ENCODE measurements at regions of chr6 and their contacts with region 1.

Region 1: DNA sequence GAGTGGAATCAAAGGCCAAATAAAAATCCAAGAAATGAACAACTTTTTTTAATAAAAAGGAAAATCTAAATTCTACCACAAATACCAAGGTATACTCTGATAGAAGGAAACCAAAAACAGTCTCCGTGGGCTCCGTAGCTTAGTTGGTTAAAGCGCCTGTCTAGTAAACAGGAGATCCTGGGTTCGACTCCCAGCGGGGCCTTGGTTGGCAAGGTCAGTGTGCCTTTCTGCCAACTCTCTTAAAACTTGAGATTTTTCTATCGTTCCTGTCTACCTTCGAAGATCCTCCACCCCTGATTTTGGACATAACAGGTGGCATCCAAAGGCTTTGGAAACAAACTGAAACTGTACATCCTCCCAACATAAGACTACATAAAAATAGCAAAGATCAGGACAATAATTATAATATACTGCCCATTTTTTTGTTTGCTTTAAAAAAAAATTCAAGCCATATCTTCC is 197.9 kb downstream of the TRIM27 start:
- DNase-seq: peak; percentile 25
- ATAC-seq: no peak
- H3K4me3 ChIP-seq: no peak overlapping the region
- H3K27ac ChIP-seq: no peak overlapping the region
- H3K4me1 ChIP-seq: peaks cover 49% of the 10 kb centered on the region
- H3K27me3 ChIP-seq: peaks cover 0 to 12% of the 10 kb centered on the region in 2 experiments; a peak in 2 of 5 replicates
- CTCF ChIP-seq: no peak
- EP300 ChIP-seq: no peak
- POLR2A ChIP-seq: no peak
- RAD21 ChIP-seq: no peak

Region 2: GRCh38 chr6:28807682-28808280 is 81.9 kb after region 1 on chr6:
- CTCF ChIA-PET with region 1: no interaction called
- POLR2A ChIA-PET with region 1: no interaction called
- in situ Hi-C with region 1: no loop called
- intact Hi-C with region 1: loop called (anchors 5 kb)
- DNase-seq: peak; percentile 81
- ATAC-seq: peak; percentile 28
- H3K4me3 ChIP-seq: peak overlapping the region; percentile 54 to 78 (median 67)
- H3K27ac ChIP-seq: no peak overlapping the region
- H3K4me1 ChIP-seq: peaks cover 57% of the 10 kb centered on the region
- H3K27me3 ChIP-seq: peaks cover 2 to 18% of the 10 kb centered on the region in 2 experiments; a peak in 2 of 5 replicates
- CTCF ChIP-seq: no peak
- EP300 ChIP-seq: no peak; a peak in 1 of 4 replicates
- POLR2A ChIP-seq: no peak
- RAD21 ChIP-seq: no peak; the same call in 1 of the 2 replicates

Measured in HepG2 (cell line).